Panc1 (cell line): ENCODE measurements at regions of chr15 and their contacts with region 1.

Region 1: GRCh38 chr15:66966257-66966656 is 99.1 kb upstream of the SMAD3 start:
- DNase-seq: no peak
- ATAC-seq: no peak
- H3K4me3 ChIP-seq: no peak overlapping the region
- H3K27ac ChIP-seq: no peak overlapping the region
- H3K4me1 ChIP-seq: peaks cover 3% of the 10 kb centered on the region
- H3K27me3 ChIP-seq: no peaks in the 10 kb centered on the region
- CTCF ChIP-seq: no peak

Region 2: GRCh38 chr15:66294157-66294931 is 671.9 kb before region 1 on chr15:
- CTCF ChIA-PET with region 1: no interaction called
- POLR2A ChIA-PET with region 1: interaction called, 10 read pairs
- in situ Hi-C with region 1: no loop called
- intact Hi-C with region 1: no loop called
- DNase-seq: peak; percentile 15
- ATAC-seq: peak; percentile 66
- H3K4me3 ChIP-seq: peak overlapping the region; percentile 62 to 83
- H3K27ac ChIP-seq: peak overlapping the region; percentile 91
- H3K4me1 ChIP-seq: peaks cover 22% of the 10 kb centered on the region
- H3K27me3 ChIP-seq: no peaks in the 10 kb centered on the region
- CTCF ChIP-seq: no peak

Region 3: GRCh38 chr15:66707310-66708082 is 258.8 kb before region 1 on chr15:
- CTCF ChIA-PET with region 1: no interaction called
- POLR2A ChIA-PET with region 1: no interaction called
- in situ Hi-C with region 1: no loop called
- intact Hi-C with region 1: no loop called
- DNase-seq: no peak
- ATAC-seq: peak; percentile 32
- H3K4me3 ChIP-seq: peak overlapping the region; percentile 91 to 97
- H3K27ac ChIP-seq: peak overlapping the region; percentile 94
- H3K4me1 ChIP-seq: peaks cover 80% of the 10 kb centered on the region
- H3K27me3 ChIP-seq: no peaks in the 10 kb centered on the region
- CTCF ChIP-seq: peak; percentile 56; the same call in 1 of the 2 replicates

Region 4: DNA sequence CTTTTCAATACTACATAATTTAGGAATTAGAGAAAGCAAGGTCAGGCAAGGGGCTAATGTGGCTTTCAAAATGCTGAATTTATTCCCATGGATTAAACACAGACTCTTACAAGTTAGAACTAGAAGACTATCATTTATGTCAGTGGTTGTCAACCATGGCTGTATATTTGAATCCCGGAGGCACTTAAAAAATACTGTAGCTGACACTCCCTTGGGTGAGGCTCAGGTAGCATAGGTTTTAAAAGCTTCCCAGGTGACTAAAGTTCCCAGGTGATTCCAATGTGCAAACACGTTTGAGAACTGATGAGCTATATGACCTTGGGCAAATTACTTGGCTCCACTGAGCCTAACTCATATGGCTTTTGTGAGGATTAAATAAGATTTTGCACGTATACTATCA is 258.6 kb after region 1 on chr15:
- CTCF ChIA-PET with region 1: interaction called, 10 read pairs
- POLR2A ChIA-PET with region 1: no interaction called
- in situ Hi-C with region 1: no loop called
- intact Hi-C with region 1: no loop called
- DNase-seq: no peak
- ATAC-seq: no peak
- H3K4me3 ChIP-seq: no peak overlapping the region
- H3K27ac ChIP-seq: no peak overlapping the region
- H3K4me1 ChIP-seq: no peaks in the 10 kb centered on the region
- H3K27me3 ChIP-seq: no peaks in the 10 kb centered on the region
- CTCF ChIP-seq: no peak